Cardiac septum (tissue), 1 donor: ENCODE measurements at regions of chr3 and their contacts with region 1.

Region 1: DNA sequence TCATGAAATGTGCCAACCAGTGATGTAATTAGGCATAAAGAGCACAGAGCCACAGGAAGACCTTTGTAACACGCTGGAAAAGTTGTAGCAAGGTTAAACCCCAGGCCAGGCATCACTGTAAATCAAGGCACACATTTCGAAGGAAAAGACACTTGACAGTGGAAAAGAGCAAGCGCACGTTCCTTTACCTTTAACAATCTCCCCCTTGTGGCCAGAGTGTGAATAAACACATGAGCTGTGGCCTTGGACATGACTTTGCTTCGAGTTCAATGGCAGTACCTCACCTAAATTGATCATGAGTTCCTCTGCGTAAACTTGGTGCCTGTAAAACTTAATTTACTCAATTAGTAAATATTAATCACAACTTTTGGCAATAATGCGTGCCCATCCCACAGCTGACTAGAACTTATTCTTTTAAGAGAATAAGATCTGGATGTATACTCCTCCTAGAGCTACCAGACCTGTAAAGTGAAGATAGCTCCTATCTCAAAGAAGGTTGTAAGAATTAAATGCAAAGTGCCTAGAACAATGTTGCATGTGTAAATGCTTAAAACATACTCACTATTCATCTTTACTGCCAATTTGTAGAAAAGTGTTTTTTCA is 757.0 kb upstream of the NECTIN3 start:
- DNase-seq: no peak

Region 2: DNA sequence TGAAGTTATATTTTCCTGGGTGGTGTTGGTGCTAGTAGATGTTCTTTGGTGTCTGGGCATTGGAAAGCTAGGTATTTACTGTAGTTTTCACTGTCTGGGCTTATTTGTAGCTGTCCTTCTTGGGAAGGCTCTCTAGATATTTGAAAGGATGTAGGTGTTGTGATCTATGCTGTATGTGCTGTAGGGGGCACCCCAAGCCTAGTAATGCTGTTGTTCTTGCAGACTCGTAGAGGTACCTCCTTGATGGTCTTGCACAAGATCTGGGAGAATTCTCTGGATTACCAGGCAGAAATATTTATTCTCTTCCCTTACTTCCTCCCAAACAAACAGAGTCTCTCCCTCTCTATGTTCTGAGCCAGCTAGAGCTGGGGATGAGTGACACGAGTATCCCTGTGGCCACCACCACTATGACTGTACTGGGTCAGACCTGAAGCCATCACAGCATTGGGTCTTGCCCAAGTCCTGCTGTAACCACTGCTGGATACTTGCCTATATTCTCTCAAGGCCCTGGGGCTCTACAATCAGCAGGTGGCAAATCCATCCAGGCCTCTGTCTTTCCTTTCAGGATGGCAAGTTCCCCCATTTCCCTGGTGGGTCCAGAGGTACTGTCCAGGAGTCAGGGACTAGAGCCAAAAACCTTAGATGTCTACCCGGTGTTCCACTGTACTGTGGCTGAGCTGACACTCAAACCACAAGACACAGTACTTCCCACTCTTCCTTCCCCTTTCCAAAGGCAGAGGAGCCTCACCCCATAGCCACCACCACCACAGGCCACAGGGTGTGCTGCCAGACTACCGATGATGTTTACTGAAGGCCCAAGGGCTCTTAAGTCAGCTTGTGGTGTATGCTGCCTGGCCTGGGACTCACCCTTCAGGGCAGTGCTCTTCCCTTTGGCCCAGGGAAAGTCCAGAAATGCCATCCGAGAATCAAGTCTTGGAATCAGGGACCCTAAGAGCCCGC is 782.1 kb before region 1 on chr3:
- intact Hi-C with region 1: loop called (anchors 10 kb)
- DNase-seq: no peak

Region 3: DNA sequence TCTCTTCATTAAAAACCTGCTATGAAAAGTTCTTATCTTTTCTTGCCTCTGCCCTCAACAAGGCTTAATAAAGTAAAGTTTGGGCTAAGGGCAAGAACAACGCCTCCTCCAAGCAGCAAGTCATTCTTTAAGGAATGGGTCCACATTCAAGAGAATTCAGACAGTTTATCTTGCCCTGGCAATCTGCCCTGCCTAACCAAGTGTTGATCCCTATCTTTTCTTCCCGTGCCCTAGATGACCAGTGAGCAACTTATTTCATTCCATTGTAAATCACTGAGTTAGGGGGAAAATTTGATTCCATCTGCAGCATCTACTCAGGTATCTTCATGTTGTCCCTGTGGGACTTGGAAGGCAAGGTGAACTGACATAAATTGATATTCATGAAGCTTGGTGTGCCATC is 607.0 kb before region 1 on chr3:
- intact Hi-C with region 1: no loop called
- DNase-seq: no peak

Region 4: DNA sequence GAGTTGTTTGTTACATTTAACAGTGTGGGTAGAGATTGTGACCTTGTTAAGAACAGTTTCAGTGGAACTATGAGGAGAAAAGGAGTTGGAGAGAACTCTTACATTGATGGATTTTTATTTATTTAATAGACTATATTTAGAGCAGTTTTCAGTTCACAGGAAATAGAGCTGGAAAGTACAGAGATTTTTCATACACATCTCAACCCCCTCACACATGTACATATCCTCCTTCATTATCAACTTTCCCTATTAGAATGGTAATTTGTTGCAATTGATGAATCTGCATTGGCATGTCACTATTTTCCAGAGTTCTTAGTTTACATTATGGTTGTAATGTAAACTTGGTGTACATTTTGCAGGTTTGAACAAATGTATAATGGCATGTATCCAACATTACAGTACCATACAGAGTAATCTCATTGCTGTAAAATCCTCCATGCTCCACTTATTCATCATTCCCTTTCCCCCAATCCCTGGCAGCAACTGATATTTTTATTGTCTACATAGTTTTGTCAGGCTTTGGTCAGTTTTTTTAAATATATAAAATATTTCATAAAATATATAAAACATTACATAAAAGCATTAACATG is 220.7 kb before region 1 on chr3:
- intact Hi-C with region 1: no loop called
- DNase-seq: no peak

Region 5: GRCh38 chr3:110352841-110353604 is 38.4 kb after region 1 on chr3:
- intact Hi-C with region 1: no loop called
- DNase-seq: no peak

Region 6: DNA sequence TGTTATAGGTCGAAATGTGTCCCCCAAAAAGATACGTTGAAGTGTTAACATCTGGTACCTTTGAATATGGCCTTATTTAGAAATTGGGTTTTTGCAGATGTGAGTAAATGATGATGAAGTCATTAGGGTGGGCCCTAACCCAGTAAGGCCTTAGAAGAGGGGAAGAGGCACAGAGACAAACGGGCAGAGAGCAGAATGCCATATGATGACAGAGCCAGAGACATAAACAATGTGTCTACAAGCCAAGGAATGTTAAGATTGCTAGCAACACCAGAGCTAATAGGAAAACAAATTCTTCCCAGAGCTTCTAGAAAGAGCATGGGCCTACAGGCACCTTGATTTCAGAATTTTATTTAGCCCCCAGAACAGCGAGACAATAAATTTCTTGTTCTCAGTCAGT is 63.9 kb after region 1 on chr3:
- intact Hi-C with region 1: no loop called
- DNase-seq: no peak